CD8-positive, alpha-beta T cell (primary cell): ENCODE measurements at regions of chr11 and their contacts with region 1.

Region 1: DNA sequence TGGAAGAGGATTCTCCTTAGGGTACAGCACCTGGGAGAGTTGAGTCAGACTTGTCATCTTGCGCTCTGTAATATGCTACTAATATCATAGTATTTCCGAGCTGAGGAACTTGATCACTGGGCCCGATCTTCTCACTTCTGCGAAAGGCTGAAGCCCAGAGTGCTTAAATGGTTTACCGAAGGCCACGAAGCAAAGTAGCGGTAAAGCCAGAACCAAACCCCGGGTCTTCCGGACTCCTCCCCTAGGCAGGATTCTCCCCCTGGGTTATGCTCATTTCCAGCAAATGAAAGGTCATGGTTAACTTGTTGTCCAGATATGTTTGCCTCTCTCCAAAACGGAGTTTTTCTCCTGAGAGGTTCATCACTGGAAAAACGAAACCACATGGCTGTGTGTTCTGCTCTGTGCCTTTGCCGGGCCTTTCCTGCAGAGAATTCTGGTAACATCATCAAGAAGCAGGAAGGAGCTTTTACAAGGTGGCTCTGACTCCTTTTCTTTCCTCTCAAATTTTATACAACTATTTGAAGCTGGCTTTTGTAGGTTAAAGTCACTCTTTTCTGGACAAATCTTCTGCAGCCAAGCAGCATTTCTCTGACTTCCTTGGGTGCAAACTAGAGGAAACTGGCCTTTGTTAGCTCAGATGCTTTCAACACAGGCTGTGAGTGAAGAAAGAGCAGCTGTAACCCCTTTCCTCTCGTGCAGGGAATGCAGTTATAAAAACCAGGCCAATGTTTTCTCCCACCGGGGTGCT is 35.5 kb downstream of the UBASH3B start:
- DNase-seq: peak in 2 of 9 experiments; percentile 20 to 56
- ATAC-seq: peak; percentile 60
- H3K4me3 ChIP-seq: peak overlapping the region; percentile 25 to 38
- H3K4me3 Mint-ChIP-seq: peak overlapping the region; percentile 79
- H3K27ac ChIP-seq: peak overlapping the region; percentile 32 to 83
- H3K27ac Mint-ChIP-seq: peak overlapping the region; percentile 91
- H3K4me1 ChIP-seq: peaks cover 65% of the 10 kb centered on the region
- H3K4me1 Mint-ChIP-seq: peaks cover 83% of the 10 kb centered on the region
- H3K27me3 ChIP-seq: no peaks in the 10 kb centered on the region
- H3K27me3 Mint-ChIP-seq: no peaks in the 10 kb centered on the region
- CTCF ChIP-seq: no peak

Region 2: DNA sequence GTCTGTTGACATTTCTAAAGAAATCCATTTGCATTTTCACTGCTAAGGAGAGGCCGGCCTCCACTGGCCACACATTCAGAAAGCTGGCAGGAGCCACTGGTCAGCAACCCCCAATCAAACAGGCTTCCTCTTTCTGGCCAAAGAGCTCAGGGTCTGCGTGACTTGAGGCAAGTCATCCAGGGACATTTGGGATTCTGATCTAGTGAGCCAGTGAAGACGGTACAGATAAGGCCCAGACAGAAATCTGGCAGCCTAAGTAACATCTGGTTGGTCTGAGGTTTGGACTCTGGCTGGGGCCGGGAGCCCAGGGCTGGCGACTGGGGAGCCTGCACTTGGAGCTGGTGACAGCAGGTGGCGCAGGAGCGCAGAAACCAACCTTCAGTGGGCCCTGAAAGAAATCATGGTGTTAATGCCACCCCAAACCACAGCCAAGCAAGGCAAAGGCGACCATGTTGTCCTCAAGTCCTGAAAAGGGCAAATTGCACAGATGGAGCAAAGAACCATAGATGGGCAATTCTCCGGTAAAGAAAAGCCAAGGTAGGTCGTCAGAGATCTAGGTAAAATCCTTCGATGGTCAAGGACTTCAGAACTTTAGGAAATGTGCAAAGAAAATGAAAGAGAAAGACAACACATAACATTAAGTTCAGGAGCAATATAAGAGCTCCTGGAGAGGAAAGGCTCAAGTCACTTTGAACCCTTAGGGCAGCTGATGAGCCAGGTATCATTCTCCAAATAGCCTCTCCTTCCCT is 475.6 kb before region 1 on chr11:
- CTCF ChIA-PET with region 1: no interaction called
- POLR2A ChIA-PET with region 1: no interaction called
- intact Hi-C with region 1: no loop called
- DNase-seq: peak in 4 of 9 experiments; percentile 5 to 12 (median 8)
- ATAC-seq: no peak
- H3K4me3 ChIP-seq: no peak overlapping the region
- H3K4me3 Mint-ChIP-seq: no peak overlapping the region
- H3K27ac ChIP-seq: no peak overlapping the region
- H3K27ac Mint-ChIP-seq: no peak overlapping the region
- H3K4me1 ChIP-seq: no peaks in the 10 kb centered on the region
- H3K4me1 Mint-ChIP-seq: no peaks in the 10 kb centered on the region
- H3K27me3 ChIP-seq: no peaks in the 10 kb centered on the region
- H3K27me3 Mint-ChIP-seq: peaks cover 15% of the 10 kb centered on the region
- CTCF ChIP-seq: no peak

Region 3: DNA sequence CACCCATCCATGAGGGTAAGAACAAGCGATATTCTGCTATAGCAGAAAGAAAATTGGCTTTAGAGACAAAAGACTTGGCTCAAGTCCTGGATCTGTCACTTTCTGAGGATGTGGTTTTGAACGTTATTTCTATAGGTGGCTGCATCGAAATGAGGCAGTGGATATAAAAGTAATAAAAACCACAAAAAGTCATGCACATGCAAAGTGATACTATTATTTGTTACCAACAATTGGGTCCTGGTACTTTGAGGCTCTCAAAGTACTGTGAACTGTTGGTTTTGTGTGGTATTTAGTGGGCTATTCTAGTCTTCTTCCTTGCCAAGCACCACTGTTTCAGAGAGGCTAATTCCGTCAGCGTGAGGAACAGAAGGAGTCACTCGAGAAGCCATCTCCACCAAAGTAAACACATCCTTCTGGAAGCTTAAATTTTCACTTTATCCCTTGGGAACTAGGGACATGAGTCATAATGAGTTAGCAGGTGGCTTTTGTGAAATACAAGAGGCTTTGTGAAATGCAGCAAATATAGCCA is 22.3 kb before region 1 on chr11:
- CTCF ChIA-PET with region 1: interaction called, 19 read pairs
- POLR2A ChIA-PET with region 1: interaction called, 32 read pairs
- intact Hi-C with region 1: no loop called
- DNase-seq: peak in 2 of 9 experiments; percentile 38 to 66
- ATAC-seq: peak; percentile 72
- H3K4me3 ChIP-seq: no peak overlapping the region
- H3K4me3 Mint-ChIP-seq: peak overlapping the region; percentile 42
- H3K27ac ChIP-seq: peak overlapping the region; percentile 4 to 39
- H3K27ac Mint-ChIP-seq: peak overlapping the region; percentile 90
- H3K4me1 ChIP-seq: peaks cover 63% of the 10 kb centered on the region
- H3K4me1 Mint-ChIP-seq: peaks cover 77% of the 10 kb centered on the region
- H3K27me3 ChIP-seq: no peaks in the 10 kb centered on the region
- H3K27me3 Mint-ChIP-seq: no peaks in the 10 kb centered on the region
- CTCF ChIP-seq: no peak

Region 4: DNA sequence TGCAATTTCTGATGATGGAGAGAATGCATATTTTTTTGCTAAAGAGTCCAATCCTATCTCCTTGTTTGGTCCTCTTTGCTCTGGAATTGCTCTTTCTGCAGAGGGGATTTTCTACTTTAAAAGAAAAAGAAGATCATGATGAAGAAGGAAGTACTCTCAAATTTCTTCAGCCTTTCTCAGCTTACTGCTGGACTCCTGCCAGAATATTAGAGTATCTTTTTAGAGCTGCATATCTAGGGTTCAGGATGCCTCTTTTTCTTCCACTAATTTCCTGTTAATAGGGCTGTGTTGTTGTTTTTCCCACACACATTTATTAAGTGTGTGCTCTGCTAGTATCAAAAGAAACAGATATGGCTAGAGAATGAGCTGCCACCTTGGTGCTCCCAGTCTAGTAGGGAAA is 17.3 kb before region 1 on chr11:
- CTCF ChIA-PET with region 1: interaction called, 19 read pairs
- POLR2A ChIA-PET with region 1: interaction called, 32 read pairs
- intact Hi-C with region 1: loop called in 1 of 2 experiments (anchors 2 kb)
- DNase-seq: peak in 1 of 9 experiments; percentile 32
- ATAC-seq: no peak
- H3K4me3 ChIP-seq: no peak overlapping the region
- H3K4me3 Mint-ChIP-seq: no peak overlapping the region
- H3K27ac ChIP-seq: no peak overlapping the region
- H3K27ac Mint-ChIP-seq: peak overlapping the region; percentile 39
- H3K4me1 ChIP-seq: peaks cover 73% of the 10 kb centered on the region
- H3K4me1 Mint-ChIP-seq: peaks cover 82% of the 10 kb centered on the region
- H3K27me3 ChIP-seq: no peaks in the 10 kb centered on the region
- H3K27me3 Mint-ChIP-seq: no peaks in the 10 kb centered on the region
- CTCF ChIP-seq: no peak